ENCODE measurements at regions of chr1 and their contacts with region 1.

Region 1: DNA sequence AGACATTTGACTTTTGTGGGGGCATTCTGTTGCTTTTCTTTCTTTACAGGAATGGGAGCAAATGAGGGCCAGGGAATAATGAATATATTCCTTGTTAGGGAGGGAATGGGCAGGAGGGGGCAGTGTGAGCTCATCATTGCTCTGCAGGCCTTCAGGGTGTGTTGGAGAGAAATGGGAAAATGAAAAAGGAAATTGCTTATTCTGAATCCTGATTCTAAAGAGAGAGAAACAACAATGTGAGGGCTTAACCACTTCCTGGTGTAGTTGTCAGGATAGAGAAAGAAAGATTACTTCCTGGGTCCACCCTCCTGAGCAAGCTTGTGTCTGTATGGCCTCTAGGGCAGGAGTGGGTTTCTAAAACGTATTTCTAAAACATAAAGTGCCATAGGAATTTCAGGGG is 28.3 kb downstream of the VANGL2 start:
- DNase-seq: peak; percentile 15
- H3K4me3 Mint-ChIP-seq: no peak overlapping the region
- H3K27ac Mint-ChIP-seq: peak overlapping the region; percentile 91
- H3K4me1 Mint-ChIP-seq: peaks cover 59% of the 10 kb centered on the region
- H3K27me3 Mint-ChIP-seq: no peaks in the 10 kb centered on the region

Region 2: GRCh38 chr1:160244209-160244608 is 184.4 kb before region 1 on chr1:
- intact Hi-C with region 1: no loop called
- DNase-seq: no peak
- H3K4me3 Mint-ChIP-seq: no peak overlapping the region
- H3K27ac Mint-ChIP-seq: no peak overlapping the region
- H3K4me1 Mint-ChIP-seq: no peaks in the 10 kb centered on the region
- H3K27me3 Mint-ChIP-seq: no peaks in the 10 kb centered on the region

Region 3: DNA sequence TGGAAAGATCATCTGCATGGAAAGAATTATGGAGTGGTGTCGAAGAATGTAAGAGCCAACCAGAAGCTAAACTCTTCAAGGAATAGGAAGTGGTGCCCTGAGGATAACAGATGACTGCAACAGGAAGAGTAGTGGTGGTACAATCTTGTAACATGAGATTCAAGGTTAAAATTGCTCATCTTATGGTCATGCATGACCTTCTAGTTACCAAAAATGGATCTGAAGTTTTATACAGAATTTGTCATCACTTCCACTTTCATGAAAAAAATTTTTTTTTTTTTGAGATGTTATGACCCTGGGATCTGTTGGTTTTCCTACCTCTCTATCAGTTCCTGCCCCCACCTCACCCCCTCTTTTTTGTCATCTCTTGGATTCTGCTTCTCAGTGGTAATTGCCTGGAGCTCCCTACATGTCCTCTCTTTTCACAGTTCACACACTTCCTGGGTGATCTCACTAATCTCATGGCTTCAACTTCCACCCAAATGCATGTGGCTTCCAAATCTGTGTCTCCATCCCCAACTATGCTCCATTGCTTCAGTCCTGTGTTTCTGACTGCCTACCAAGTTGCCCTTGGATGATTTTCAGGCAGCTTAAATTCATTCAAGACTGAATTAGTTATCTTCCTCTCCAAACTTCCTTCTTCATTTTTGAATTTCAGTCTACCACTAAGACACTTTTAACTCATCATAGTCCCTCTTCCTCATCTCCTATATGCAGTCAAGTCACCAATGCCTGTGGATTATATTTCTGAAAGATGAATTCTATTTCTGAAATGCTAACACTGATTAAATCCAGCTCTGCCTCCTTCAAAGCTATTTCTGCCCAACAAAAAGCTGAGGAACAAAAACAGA is 46.0 kb after region 1 on chr1:
- intact Hi-C with region 1: loop called (anchors 1 kb)
- DNase-seq: no peak
- H3K4me3 Mint-ChIP-seq: no peak overlapping the region
- H3K27ac Mint-ChIP-seq: no peak overlapping the region
- H3K4me1 Mint-ChIP-seq: no peaks in the 10 kb centered on the region
- H3K27me3 Mint-ChIP-seq: no peaks in the 10 kb centered on the region

Measured in activated T-helper 1 cell treated with anti-CD3 and anti-CD28 coated beads, Interleukin-12 subunit alpha, Interleukin-12 subunit beta, Interleukin-2, Interleukin-4 antibody, amounts not matched to agents 30 ng/mL and 10 ng/mL and 1 ng/mL, durations not matched to agents 14 hours and 24 hours and 36 hours (primary cell).